ENCODE measurements at regions of chr9 and their contacts with region 1.

Region 1: DNA sequence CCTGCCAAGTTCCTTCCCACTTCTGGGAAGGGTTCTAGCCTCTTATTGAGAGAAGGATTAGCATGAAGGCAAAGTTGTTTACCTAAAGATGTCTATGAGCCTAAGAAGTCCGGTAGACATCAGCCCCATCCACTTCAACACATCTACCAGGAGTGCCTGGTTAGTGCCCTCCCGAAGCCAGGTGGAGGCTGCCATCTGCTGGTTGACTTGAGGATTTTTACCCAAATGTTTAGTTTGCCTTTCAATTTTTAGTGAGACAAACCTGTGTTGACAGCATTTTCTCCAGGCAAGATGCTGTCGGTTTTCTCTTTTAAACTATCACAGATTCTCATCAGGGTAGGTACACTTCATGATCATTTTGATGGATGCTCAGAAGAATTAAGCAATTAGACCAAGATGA is 83.6 kb upstream of the TNFSF8 start:
- DNase-seq: peak; percentile 45 to 72
- H3K4me3 ChIP-seq: no peak overlapping the region
- H3K4me1 ChIP-seq: no peaks in the 10 kb centered on the region
- H3K27me3 ChIP-seq: no peaks in the 10 kb centered on the region

Region 2: DNA sequence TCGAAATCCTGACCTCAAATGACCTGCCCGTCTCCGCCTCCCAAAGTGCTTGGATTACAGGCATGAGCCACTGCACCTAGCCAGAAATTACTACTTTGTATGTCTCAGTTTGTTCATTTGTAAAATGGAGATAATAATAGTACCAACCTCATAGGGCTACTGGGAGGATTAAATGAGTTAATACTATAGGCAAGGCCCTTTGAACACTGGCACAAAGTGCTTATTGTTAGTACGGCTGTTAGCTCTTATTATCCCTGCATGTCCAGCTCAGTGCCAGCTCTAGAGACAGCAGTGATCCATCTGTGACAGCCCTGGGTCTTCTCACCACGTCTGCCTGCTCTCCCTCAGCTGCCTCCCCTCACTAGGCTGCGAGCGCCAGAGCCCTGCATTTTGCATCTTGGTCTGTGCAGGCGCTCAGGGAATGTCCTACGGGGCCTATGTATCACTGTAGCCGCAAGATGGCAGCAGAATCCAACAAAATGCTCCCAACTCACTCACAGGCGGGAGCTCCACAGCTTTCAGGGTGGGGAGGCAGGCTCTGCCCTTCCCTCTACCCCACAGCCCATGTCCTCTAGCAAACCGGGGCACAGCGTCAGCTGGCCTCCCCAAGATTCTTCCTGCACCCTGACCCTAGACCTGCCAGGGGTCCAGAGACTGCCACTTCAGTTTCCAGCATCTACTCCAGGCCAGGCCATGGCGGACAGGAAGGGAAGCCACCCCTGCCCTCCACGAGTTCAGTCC is 608.5 kb before region 1 on chr9:
- in situ Hi-C with region 1: loop called (anchors 10 kb)
- DNase-seq: peak; percentile 71 to 86
- H3K4me3 ChIP-seq: no peak overlapping the region
- H3K4me1 ChIP-seq: peaks cover 13% of the 10 kb centered on the region
- H3K27me3 ChIP-seq: no peaks in the 10 kb centered on the region

Region 3: GRCh38 chr9:114677418-114677817 is 336.6 kb before region 1 on chr9:
- in situ Hi-C with region 1: loop called (anchors 10 kb)
- DNase-seq: peak; percentile 56 to 76
- H3K4me3 ChIP-seq: no peak overlapping the region
- H3K4me1 ChIP-seq: peaks cover 5% of the 10 kb centered on the region
- H3K27me3 ChIP-seq: no peaks in the 10 kb centered on the region

Region 4: GRCh38 chr9:114738581-114739316 is 275.2 kb before region 1 on chr9:
- in situ Hi-C with region 1: loop called (anchors 5 kb)
- DNase-seq: peak; percentile 17 to 68
- H3K4me3 ChIP-seq: no peak overlapping the region
- H3K4me1 ChIP-seq: no peaks in the 10 kb centered on the region
- H3K27me3 ChIP-seq: peaks cover 17% of the 10 kb centered on the region